Dendritic cell treated with granulocyte-macrophage colony-stimulating factor and Interleukin-4, amounts not matched to agents 40 ng/mL and 50 ng/mL, for 4 days (primary cell): ENCODE measurements at regions of chr18 and their contacts with region 1.

Region 1: GRCh38 chr18:59941331-59941730 is 41.5 kb downstream of the PMAIP1 start:
- H3K4me3 Mint-ChIP-seq: no peak overlapping the region
- H3K27ac Mint-ChIP-seq: peak overlapping the region; percentile 43
- H3K4me1 Mint-ChIP-seq: peaks cover 17% of the 10 kb centered on the region
- H3K27me3 Mint-ChIP-seq: peaks cover 6% of the 10 kb centered on the region

Region 2: DNA sequence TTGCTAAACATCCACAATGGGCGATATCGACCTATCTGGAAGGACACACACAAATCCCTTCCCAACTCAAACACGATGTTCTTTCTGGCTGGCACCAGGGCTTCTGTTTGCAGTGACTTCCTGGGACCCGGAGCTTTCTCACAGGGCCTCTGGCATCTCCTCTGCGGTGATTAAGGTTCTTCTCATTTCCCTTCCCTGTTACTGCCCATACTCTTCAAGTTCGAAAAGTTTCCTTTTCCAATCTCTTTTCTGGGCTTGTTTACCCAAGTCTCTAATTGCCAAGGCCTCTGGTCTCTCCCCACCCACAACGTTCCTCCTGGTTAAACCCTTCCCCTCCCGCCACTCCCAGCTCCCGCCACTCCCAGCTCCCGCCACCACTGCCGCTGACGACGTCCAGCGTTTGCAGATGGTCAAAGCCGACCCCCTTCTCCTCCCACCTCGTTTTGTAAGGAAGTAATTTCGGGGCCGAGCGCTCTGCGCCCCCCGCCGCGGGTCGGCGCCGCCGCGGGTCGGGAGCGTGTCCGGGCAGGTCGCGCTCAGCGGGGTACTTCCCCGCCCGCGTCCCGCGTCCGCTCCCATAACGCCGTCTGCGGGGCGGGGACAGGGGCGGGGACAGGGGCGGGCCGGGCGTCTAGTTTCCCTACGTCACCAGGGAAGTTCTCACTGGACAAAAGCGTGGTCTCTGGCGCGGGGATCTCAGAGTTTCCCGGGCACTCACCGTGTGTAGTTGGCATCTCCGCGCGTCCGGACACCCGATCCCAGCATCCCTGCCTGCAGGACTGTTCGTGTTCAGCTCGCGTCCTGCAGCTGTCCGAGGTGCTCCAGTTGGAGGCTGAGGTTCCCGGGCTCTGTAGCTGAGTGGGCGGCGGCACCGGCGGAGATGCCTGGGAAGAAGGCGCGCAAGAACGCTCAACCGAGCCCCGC is 41.8 kb before region 1 on chr18 and contains the start of gene PMAIP1:
- intact Hi-C with region 1: loop called (anchors 5 kb)
- H3K4me3 Mint-ChIP-seq: peak within 1 kb of the TSS; percentile 90
- H3K27ac Mint-ChIP-seq: peak within 1 kb of the TSS; percentile 89
- H3K4me1 Mint-ChIP-seq: peaks cover 26% of the 10 kb centered on the region
- H3K27me3 Mint-ChIP-seq: peaks cover 5% of the 10 kb centered on the region